ENCODE measurements at regions of chr11 and their contacts with region 1.

Region 1: GRCh38 chr11:14336507-14337503 is 22.2 kb downstream of the RRAS2 start:
- DNase-seq: peak; percentile 100
- H3K4me3 ChIP-seq: peak overlapping the region; percentile 37 to 46 (median 45)
- H3K27ac ChIP-seq: peak overlapping the region; percentile 98
- H3K4me1 ChIP-seq: peaks cover 31% of the 10 kb centered on the region
- H3K27me3 ChIP-seq: no peaks in the 10 kb centered on the region
- CTCF ChIP-seq: no peak

Region 2: GRCh38 chr11:14413307-14414069 is 76.7 kb after region 1 on chr11:
- CTCF ChIA-PET with region 1: no interaction called
- dilution Hi-C with region 1: no loop called
- in situ Hi-C with region 1: no loop called
- intact Hi-C with region 1: loop called (anchors 2 kb)
- DNase-seq: peak; percentile 48
- H3K4me3 ChIP-seq: no peak overlapping the region
- H3K27ac ChIP-seq: peak overlapping the region; percentile 20
- H3K4me1 ChIP-seq: peaks cover 67% of the 10 kb centered on the region
- H3K27me3 ChIP-seq: no peaks in the 10 kb centered on the region
- CTCF ChIP-seq: peak; percentile 10 to 21